ENCODE measurements at regions of chr11 and their contacts with region 1.

Region 1: DNA sequence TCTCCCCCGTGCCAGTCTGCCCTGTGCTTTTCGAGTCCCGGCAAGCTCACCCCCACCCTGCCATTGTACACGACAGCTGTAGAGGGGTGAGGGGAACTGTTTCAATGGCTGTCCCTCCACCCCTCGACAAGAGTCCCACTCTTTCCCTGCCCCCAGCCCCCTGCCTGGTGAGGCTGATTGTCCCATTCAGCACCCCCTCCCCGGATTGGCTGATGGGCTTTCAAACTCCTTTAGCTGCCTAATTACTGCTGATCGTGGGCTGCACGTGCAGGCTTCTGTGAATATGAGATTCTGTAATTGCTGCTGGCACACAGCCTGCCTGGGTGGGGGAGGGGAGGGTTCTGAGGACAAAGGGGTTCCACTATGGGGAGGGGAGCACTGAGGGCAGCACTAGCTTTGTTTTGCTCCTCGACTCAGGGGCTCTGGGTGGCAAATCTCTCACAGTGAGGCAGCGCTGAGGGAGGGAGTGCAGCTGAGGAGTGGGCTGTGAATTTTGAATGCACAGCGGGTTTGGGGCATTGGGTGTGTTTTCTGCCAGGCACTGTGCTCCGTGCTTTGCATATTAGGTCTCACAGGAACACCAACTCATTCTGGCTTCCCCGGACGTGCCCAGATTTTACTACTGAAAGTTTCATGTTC is 42.6 kb upstream of the ACCSL start:
- DNase-seq: no peak
- H3K4me3 ChIP-seq: no peak overlapping the region
- CTCF ChIP-seq: no peak

Region 2: DNA sequence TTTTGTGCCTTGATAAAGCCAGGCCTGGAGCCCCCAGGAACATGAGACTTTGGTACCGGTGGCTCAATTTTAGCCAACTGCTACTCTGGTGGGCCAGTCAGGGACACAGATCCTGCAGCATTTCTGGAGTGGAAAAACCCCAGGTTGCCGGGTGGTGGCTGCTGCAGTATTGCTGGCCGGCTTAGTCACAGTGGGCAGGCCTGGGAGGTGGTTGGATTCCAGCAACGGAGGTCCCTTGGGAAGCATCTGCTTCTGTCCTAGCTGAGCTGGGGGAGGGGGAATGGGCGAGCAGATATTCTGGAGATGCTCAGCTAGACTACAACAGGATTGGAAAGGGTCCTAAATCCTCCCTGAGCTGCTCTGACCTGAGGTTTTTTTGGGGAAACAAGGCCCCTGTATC is 10.9 kb after region 1 on chr11:
- CTCF ChIA-PET with region 1: interaction called, 13 read pairs
- POLR2A ChIA-PET with region 1: no interaction called
- DNase-seq: peak; percentile 53
- H3K4me3 ChIP-seq: no peak overlapping the region
- CTCF ChIP-seq: no peak

Measured in AG04449 (cell line).